ENCODE measurements at regions of chr13 and their contacts with region 1.

Region 1: DNA sequence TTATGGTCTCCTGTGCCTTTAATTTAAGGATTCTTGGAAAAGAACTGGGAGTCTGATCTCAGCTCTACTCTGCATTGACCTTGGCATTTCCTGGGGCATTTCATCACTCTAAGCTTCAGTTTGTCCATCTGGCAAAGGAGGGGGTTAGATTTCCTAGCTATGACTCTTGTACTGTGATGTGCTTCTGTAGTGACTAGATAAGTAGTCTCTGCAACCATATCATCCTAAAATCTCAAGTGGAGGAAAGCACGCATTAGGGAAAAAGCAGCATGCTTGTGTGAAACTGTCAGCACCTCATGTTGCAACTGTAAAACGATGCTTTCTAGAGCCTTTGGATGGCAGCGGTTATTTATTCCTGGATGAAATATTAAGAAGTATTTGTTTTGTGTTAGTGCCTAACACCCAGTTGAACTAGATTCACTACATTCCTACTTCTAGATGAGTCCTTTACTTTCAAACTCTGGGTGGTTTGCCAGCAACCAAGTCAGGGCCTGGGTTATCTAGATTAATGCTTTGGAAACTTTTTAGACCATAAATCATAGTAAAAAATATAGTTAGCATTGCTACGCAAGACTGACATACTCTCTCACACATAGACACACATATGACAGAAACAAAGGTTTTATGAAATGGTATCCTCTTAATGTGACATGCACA is 6.8 kb downstream of the WDFY2 start:
- DNase-seq: peak; percentile 90
- ATAC-seq: peak; percentile 87
- H3K4me3 ChIP-seq: peak overlapping the region; percentile 12; the same call in 1 of the 2 replicates
- H3K27ac ChIP-seq: peak overlapping the region; percentile 80; the same call in 1 of the 2 replicates
- H3K4me1 ChIP-seq: peaks cover 7% of the 10 kb centered on the region
- H3K27me3 ChIP-seq: no peaks in the 10 kb centered on the region
- CTCF ChIP-seq: 0 out of 2 replicates have a peak, but pooled peaks have one; percentile 11
- POLR2A ChIP-seq: no peak
- RAD21 ChIP-seq: no peak; the same call in none of the 2 replicates

Region 2: GRCh38 chr13:51549050-51549449 is 42.0 kb before region 1 on chr13:
- CTCF ChIA-PET with region 1: no interaction called
- POLR2A ChIA-PET with region 1: no interaction called
- dilution Hi-C with region 1: no loop called
- in situ Hi-C with region 1: no loop called
- intact Hi-C with region 1: no loop called
- DNase-seq: no peak
- ATAC-seq: no peak
- H3K4me3 ChIP-seq: no peak overlapping the region
- H3K27ac ChIP-seq: no peak overlapping the region
- H3K4me1 ChIP-seq: no peaks in the 10 kb centered on the region
- H3K27me3 ChIP-seq: no peaks in the 10 kb centered on the region
- CTCF ChIP-seq: no peak
- POLR2A ChIP-seq: no peak
- RAD21 ChIP-seq: no peak

Region 3: DNA sequence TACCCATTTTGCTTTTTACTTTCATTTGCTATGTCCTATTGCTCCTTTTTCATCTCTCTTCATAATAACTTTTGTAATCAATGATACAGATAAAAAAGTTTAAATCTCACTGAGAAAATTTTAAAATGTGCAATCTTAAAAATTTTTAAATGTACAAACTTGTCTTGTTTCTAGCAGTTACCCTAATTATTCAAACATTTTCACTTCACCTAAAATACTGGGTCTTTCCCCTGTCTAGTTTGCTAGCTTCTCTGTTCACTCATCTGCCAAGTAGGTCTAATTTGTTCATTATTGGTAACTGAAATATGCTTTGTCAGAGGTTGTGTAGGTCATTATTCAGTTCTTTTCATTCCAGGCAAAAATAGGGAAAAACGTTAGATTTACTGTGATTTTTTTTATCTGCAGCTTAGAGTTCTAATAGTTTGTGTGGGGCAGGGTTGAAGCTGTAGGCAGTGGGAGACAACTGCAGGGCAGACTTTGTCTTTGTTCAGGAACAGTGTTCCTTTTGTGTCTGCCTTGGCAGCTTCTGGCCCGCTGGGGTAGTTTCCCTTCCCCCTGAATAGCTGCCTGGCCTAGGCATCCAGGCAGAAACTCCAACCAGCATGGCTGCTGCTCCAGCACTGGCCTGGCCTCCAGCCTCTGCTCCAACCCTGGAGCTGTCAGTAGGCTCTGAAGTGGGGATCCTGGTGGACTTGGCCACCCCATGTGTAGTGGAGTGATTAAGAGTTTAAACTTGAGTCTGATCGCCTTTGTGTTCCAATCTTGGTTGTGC is 41.7 kb after region 1 on chr13:
- CTCF ChIA-PET with region 1: no interaction called
- POLR2A ChIA-PET with region 1: no interaction called
- dilution Hi-C with region 1: no loop called
- in situ Hi-C with region 1: no loop called
- intact Hi-C with region 1: loop called (anchors 5 kb)
- DNase-seq: no peak
- ATAC-seq: peak; percentile 58
- H3K4me3 ChIP-seq: no peak overlapping the region
- H3K27ac ChIP-seq: peak overlapping the region; percentile 20; the same call in 1 of the 2 replicates
- H3K4me1 ChIP-seq: peaks cover 7% of the 10 kb centered on the region
- H3K27me3 ChIP-seq: no peaks in the 10 kb centered on the region
- CTCF ChIP-seq: no peak
- POLR2A ChIP-seq: no peak
- RAD21 ChIP-seq: no peak